HepG2 (cell line): ENCODE measurements at regions of chrX and their contacts with region 1.

Region 1: DNA sequence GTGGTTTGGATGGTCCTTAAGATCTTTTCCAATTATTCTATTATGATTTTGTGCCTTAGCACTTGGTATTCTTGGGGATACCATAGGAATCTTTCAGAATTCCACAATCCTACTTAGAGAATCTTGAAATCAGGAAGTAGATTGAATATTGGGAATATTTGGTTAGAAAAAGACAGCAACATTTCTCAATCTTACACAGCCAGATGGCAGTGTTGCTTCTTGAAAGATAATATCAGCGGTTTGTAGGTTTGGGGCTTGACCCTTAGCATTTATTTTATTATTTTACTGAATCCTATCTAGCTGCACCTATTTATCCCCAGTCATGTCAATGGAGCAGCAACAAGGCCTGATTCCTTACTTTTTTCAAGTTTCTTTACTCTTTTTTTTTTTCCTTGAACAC is 28.6 kb downstream of the MAGEB1 start:
- DNase-seq: no peak
- ATAC-seq: no peak
- H3K4me3 ChIP-seq: no peak overlapping the region
- H3K27ac ChIP-seq: no peak overlapping the region
- H3K4me1 ChIP-seq: no peaks in the 10 kb centered on the region
- H3K27me3 ChIP-seq: no peaks in the 10 kb centered on the region
- CTCF ChIP-seq: peak; percentile 39
- EP300 ChIP-seq: no peak
- POLR2A ChIP-seq: no peak
- RAD21 ChIP-seq: no peak

Region 2: GRCh38 chrX:30215357-30215843 is 60.1 kb before region 1 on chrX and contains the start of gene MAGEB2:
- CTCF ChIA-PET with region 1: no interaction called
- POLR2A ChIA-PET with region 1: no interaction called
- in situ Hi-C with region 1: no loop called
- intact Hi-C with region 1: no loop called
- DNase-seq: no peak
- ATAC-seq: peak; percentile 57; the same call in 2 of the 3 replicates
- H3K4me3 ChIP-seq: no peak within 1 kb of the TSS
- H3K27ac ChIP-seq: no peak within 1 kb of the TSS
- H3K4me1 ChIP-seq: no peaks in the 10 kb centered on the region
- H3K27me3 ChIP-seq: no peaks in the 10 kb centered on the region
- CTCF ChIP-seq: no peak
- EP300 ChIP-seq: no peak
- POLR2A ChIP-seq: no peak
- RAD21 ChIP-seq: no peak
- total RNA-seq, gene MAGEB2: not detected in 2 replicates

Region 3: GRCh38 chrX:30489323-30489722 is 213.8 kb after region 1 on chrX:
- CTCF ChIA-PET with region 1: no interaction called
- POLR2A ChIA-PET with region 1: no interaction called
- in situ Hi-C with region 1: no loop called
- intact Hi-C with region 1: loop called (anchors 1 kb)
- DNase-seq: peak; percentile 21
- ATAC-seq: peak; percentile 81
- H3K4me3 ChIP-seq: no peak overlapping the region
- H3K27ac ChIP-seq: no peak overlapping the region
- H3K4me1 ChIP-seq: no peaks in the 10 kb centered on the region
- H3K27me3 ChIP-seq: no peaks in the 10 kb centered on the region
- CTCF ChIP-seq: peak; percentile 42
- EP300 ChIP-seq: no peak
- POLR2A ChIP-seq: no peak
- RAD21 ChIP-seq: no peak

Region 4: DNA sequence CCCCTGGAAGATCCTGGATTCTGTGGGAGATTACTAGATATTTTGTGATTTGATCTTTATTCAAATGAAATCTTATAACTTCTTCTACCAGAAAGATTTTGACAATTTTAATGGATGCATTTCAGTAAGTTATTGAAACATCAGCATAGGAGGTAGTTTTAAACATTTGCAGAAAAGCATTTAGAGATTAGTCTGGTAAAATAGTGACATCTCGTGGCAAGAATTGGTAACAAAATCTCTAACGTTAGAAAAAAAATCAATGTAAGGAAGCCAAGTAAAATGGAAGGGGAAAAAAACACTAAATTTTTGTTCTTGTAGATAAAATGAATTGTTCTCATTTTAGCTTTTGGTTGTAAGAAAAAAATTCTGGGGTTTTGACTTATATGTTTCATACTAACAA is 228.8 kb after region 1 on chrX:
- CTCF ChIA-PET with region 1: interaction called, 7 read pairs
- POLR2A ChIA-PET with region 1: no interaction called
- in situ Hi-C with region 1: loop called (anchors 5 kb)
- intact Hi-C with region 1: loop called (anchors 1 kb)
- DNase-seq: peak; percentile 20
- ATAC-seq: no peak
- H3K4me3 ChIP-seq: no peak overlapping the region
- H3K27ac ChIP-seq: no peak overlapping the region
- H3K4me1 ChIP-seq: no peaks in the 10 kb centered on the region
- H3K27me3 ChIP-seq: no peaks in the 10 kb centered on the region
- CTCF ChIP-seq: peak; percentile 51
- EP300 ChIP-seq: no peak
- POLR2A ChIP-seq: no peak
- RAD21 ChIP-seq: no peak